ENCODE measurements at regions of chr19 and their contacts with region 1.

Region 1: DNA sequence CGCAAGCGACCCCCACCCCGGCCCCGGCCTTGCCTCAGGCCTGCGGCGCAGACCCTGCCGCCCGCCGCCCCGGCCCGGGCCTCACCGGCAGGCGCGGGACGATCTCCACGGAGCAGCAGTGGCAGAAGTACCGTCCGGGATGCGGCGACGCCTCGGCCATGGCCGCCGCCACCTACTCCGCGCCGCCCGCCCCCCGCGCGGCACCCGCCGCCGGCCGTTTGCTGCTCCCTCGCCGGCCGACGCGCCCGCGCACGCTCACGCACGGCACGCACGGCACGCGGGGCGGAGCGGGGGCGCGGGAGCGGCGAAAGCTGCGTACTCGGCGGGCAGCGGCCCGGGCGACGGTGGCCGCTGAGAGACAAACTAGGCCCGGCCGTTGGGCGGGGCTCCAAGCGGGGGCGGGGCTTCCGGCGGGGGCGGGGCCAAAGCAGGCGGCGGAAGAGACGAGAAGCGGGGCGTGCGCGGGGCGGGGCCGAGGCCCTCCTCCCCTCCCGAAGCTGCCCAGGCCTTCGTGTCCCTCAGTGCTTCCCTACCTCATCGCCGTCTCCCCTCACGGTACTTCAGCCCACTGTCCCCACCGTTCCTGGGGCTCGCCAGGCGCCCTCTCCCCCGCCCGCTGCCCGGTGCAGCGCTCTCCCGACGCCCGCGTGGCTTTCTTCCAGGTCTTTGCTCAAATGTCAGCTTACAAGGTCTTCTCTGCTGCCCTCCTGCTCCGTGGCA is at the start of gene RNF126:
- DNase-seq: peak; percentile 96
- H3K4me3 ChIP-seq: peak within 1 kb of the TSS; percentile 99
- H3K27ac ChIP-seq: peak within 1 kb of the TSS; percentile 95
- H3K4me1 ChIP-seq: peaks cover 17% of the 10 kb centered on the region
- H3K27me3 ChIP-seq: no peaks in the 10 kb centered on the region
- CTCF ChIP-seq: no peak
- total RNA-seq, gene RNF126: 90.2 and 93.3 TPM in 2 replicates

Region 2: GRCh38 chr19:732148-733069 is 69.3 kb after region 1 on chr19:
- CTCF ChIA-PET with region 1: interaction called, 6 read pairs
- POLR2A ChIA-PET with region 1: no interaction called
- intact Hi-C with region 1: loop called (anchors 1 kb)
- DNase-seq: no peak
- H3K4me3 ChIP-seq: no peak overlapping the region
- H3K27ac ChIP-seq: no peak overlapping the region
- H3K4me1 ChIP-seq: no peaks in the 10 kb centered on the region
- H3K27me3 ChIP-seq: no peaks in the 10 kb centered on the region
- CTCF ChIP-seq: no peak

Region 3: GRCh38 chr19:803686-804420 is 140.7 kb after region 1 on chr19:
- CTCF ChIA-PET with region 1: no interaction called
- POLR2A ChIA-PET with region 1: interaction called, 13 read pairs
- intact Hi-C with region 1: no loop called
- DNase-seq: no peak
- H3K4me3 ChIP-seq: no peak overlapping the region
- H3K27ac ChIP-seq: peak overlapping the region; percentile 64
- H3K4me1 ChIP-seq: peaks cover 79% of the 10 kb centered on the region
- H3K27me3 ChIP-seq: no peaks in the 10 kb centered on the region
- CTCF ChIP-seq: no peak

Region 4: DNA sequence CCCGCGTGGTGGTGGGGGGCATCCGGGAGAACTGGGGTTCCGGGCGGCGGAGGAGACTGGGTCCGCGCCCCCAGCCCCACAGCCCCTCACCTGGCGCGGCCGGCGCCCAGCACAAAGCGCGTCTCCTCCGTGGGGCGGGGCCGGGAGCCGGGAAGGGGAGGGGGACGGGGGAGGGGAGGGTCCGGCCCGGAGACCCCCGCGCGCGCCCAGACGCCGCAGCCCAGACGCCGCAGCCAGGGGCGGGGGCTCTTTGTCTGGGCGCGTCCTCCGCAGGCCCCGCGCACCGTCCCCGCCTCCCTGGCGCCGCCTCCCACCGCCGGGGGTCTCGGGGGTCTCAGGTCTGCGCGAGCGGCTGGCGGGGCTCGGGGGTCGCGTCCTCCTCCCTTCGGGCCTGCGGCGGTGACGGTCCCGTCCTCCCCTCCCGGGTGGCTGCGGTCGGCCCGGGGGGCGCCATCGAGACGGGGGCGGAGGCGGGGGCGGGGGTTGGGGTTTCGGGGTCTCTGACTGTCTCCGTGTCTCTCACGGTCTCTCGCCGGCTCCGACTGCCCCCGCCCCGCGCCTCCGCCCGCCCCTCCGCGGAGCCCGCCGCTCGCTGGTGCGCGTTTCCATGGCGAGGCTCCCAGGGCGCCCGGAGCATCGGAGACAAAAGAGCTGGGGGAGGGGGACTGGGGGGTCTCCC is 158.8 kb after region 1 on chr19 and contains the start of gene PLPPR3:
- CTCF ChIA-PET with region 1: no interaction called
- POLR2A ChIA-PET with region 1: no interaction called
- intact Hi-C with region 1: no loop called
- DNase-seq: no peak
- H3K4me3 ChIP-seq: peak within 1 kb of the TSS; percentile 69
- H3K27ac ChIP-seq: peak within 1 kb of the TSS; percentile 47
- H3K4me1 ChIP-seq: no peaks in the 10 kb centered on the region
- H3K27me3 ChIP-seq: no peaks in the 10 kb centered on the region
- CTCF ChIP-seq: no peak
- total RNA-seq, gene PLPPR3: 13.3 and 20.1 TPM in 2 replicates

Region 5: GRCh38 chr19:843180-843835 is 180.2 kb after region 1 on chr19:
- CTCF ChIA-PET with region 1: no interaction called
- POLR2A ChIA-PET with region 1: no interaction called
- intact Hi-C with region 1: no loop called
- DNase-seq: no peak
- H3K4me3 ChIP-seq: peak overlapping the region; percentile 33
- H3K27ac ChIP-seq: no peak overlapping the region
- H3K4me1 ChIP-seq: peaks cover 15% of the 10 kb centered on the region
- H3K27me3 ChIP-seq: peaks cover 7% of the 10 kb centered on the region
- CTCF ChIP-seq: no peak

Region 6: DNA sequence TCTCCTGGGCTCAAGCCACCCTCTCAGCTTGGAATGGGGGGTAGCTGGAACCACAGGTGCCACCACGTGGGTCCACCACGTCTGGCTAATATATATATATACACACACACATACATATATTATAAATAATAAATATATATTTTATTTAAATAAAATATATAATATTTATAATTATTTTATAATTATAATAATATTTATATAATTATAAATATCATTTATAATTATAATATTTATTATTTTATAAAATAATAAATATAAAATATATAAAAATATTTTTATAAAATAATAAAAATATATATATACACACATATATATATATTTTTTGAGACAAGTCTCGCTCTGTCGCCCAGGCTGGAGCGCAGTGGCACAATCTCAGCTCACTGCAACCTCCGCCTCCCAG is 191.4 kb after region 1 on chr19:
- CTCF ChIA-PET with region 1: interaction called, 10 read pairs
- POLR2A ChIA-PET with region 1: no interaction called
- intact Hi-C with region 1: no loop called
- DNase-seq: no peak
- H3K4me3 ChIP-seq: no peak overlapping the region
- H3K27ac ChIP-seq: no peak overlapping the region
- H3K4me1 ChIP-seq: no peaks in the 10 kb centered on the region
- H3K27me3 ChIP-seq: no peaks in the 10 kb centered on the region
- CTCF ChIP-seq: no peak

Region 7: GRCh38 chr19:913080-913748 is 250.1 kb after region 1 on chr19 and contains the start of gene R3HDM4:
- CTCF ChIA-PET with region 1: no interaction called
- POLR2A ChIA-PET with region 1: no interaction called
- intact Hi-C with region 1: loop called (anchors 10 kb)
- DNase-seq: peak; percentile 74
- H3K4me3 ChIP-seq: peak within 1 kb of the TSS; percentile 89
- H3K27ac ChIP-seq: peak within 1 kb of the TSS; percentile 77
- H3K4me1 ChIP-seq: peaks cover 13% of the 10 kb centered on the region
- H3K27me3 ChIP-seq: peaks cover 13% of the 10 kb centered on the region
- CTCF ChIP-seq: no peak
- total RNA-seq, gene R3HDM4: 39.3 and 45.5 TPM in 2 replicates

Region 8: GRCh38 chr19:1103708-1104310 is 440.7 kb after region 1 on chr19 and contains the start of gene GPX4:
- CTCF ChIA-PET with region 1: no interaction called
- POLR2A ChIA-PET with region 1: interaction called, 26 read pairs
- intact Hi-C with region 1: no loop called
- DNase-seq: peak; percentile 100
- H3K4me3 ChIP-seq: peak within 1 kb of the TSS; percentile 97
- H3K27ac ChIP-seq: peak within 1 kb of the TSS; percentile 94
- H3K4me1 ChIP-seq: peaks cover 30% of the 10 kb centered on the region
- H3K27me3 ChIP-seq: no peaks in the 10 kb centered on the region
- CTCF ChIP-seq: no peak
- total RNA-seq, gene GPX4: 368 and 435 TPM in 2 replicates

Measured in A673 (cell line).